Astrocyte of the cerebellum (primary cell): ENCODE measurements at regions of chr12 and their contacts with region 1.

Region 1: DNA sequence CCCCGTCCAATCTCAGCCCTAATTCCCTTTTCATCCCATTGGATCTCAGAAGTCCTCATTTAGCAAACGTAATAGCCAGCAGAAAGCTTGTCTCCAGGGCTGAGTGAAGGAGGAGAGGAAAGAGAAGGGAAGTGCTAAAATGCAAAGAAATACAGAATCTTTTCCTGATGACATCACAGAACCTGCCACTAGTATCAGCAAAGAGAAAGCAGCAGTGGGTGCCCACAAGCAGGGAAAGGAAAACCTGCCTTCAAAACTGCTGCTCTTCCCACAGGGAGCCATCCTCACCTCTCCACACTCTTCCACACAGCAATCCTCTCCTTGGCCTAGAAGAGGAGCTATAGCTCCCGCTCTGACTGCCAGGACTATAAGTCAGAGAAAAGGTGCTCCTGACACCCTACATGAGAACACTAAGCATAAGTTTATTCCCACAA is 11.3 kb downstream of the MED13L start:
- DNase-seq: no peak
- H3K4me3 ChIP-seq: no peak overlapping the region
- CTCF ChIP-seq: peak; percentile 19

Region 2: DNA sequence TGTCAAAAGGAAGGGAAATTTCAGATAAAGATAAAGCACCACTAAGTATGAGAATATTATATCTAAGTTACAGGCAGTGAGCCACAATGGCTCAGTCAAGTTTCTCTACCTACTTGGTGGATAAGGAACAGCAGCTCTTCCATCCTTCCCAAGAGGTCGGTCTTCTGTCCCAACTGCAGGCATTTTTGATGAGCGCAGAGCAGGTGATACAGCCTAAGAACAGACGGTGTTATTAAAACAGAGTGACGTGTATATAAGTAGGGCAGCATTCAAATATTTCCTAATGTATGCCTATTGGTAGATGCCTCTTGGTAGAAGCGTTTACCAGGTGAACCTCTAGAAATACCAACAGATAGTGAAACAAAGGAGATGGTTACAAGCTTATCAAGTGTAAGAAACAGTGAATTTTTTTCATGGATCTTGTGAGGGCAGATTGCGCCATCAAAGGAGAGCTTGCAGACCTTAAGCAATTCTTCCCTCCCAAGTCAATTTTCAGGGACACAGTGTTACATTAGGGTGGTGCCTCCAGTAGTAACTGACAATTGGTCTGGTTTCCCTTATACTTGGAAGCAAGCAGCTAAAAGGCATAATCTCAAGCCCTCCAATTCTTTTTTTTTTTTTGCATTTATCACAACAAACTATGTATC is 263.2 kb before region 1 on chr12:
- in situ Hi-C with region 1: loop called (anchors 5 kb)
- DNase-seq: no peak
- H3K4me3 ChIP-seq: no peak overlapping the region
- CTCF ChIP-seq: no peak